ENCODE measurements at regions of chr6 and their contacts with region 1.

Region 1: DNA sequence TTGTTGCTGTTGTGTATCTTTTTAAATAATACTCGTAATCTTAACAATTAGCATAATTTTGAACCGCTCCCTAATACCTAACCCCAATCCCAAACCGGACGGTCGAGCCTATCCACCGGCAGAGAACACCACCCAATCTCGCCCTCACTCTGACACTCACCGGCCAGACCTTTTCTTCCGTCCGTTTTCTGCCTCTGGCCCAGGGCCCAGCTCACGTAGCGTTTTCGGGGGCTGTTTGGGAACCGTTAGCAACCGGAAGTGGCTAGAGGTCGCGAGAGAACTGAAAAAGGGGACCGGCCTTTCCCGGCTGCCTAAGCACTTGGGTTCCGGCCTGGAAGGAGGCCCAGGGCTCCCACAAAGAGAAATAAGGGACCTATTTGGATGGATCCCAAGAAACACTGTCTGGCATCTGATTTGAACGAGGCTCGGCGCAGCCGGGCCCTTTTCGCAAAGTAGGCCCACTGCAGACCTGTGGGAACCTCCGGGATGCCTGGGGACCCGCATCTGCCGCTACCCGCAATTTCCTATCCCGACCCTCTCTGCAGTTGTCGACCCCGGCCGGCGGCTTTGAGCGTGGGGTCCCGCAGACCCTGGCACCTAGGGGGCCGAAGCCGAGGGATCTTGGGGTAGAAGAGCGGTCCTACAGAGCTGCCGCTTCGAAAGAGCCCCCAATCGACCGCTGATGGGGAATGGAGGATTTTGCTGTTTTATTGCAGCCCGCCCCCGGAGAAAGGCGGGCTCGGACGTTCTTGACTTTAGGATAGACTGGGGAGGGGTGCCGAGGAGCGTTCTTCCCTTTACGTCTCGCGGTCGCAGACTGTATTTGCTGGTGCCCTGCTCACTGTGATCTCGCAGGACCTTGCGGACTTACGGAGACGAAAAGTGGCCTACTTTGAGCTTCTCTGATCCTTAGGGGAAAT is 4.8 kb upstream of the ZKSCAN8 start:
- H3K4me3 Mint-ChIP-seq: peak overlapping the region; percentile 91
- H3K27ac Mint-ChIP-seq: peak overlapping the region; percentile 92
- H3K4me1 Mint-ChIP-seq: peaks cover 53% of the 10 kb centered on the region
- H3K27me3 Mint-ChIP-seq: no peaks in the 10 kb centered on the region

Region 2: DNA sequence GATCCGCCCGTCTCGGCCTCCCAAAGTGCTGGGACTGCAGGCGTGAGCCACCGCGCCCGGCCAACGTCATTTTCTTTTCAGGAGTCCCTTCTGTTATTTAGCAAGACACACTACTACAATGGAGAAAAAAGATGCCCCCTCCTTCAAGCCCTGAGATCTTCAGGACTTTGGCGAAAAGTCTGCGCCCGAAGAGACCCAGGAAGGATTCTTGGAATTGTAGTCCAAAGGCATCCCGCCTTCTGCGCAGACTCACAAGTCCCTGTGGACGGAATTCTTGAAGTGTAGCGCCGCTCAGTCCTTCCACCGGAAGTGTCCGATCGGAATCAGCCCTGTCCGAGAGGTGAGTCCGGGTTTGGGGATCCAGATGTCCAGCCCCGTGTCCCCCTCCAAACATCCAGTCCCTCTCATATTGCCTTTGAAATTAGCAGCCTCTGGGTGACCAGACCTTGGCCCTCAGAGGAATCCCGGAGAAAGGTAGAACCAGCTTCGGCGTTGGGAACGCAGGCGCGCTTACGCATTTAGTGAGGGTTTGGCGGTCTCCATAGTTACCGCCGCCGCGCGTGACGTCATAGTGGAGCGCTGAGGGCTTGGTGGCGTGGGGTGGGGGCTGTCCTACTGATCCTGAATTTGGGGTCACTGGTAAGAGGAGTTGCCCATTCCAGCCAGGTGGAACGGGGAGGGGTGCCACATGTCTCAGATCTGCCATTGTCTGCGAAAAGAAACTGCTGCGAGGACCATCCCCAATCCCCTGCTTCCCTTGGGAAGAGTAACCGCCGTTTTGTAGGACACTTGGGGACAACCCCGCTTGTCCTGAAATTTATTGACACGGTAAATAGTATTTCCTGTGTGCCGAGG is 56.0 kb before region 1 on chr6:
- intact Hi-C with region 1: loop called (anchors 2 kb)
- H3K4me3 Mint-ChIP-seq: peak overlapping the region; percentile 97
- H3K27ac Mint-ChIP-seq: peak overlapping the region; percentile 97
- H3K4me1 Mint-ChIP-seq: peaks cover 18% of the 10 kb centered on the region
- H3K27me3 Mint-ChIP-seq: peaks cover 2% of the 10 kb centered on the region

Region 3: GRCh38 chr6:28252009-28252975 is 115.4 kb after region 1 on chr6 and contains the start of gene ZKSCAN4:
- intact Hi-C with region 1: loop called (anchors 2 kb)
- H3K4me3 Mint-ChIP-seq: peak within 1 kb of the TSS; percentile 97
- H3K27ac Mint-ChIP-seq: peak within 1 kb of the TSS; percentile 90
- H3K4me1 Mint-ChIP-seq: peaks cover 14% of the 10 kb centered on the region
- H3K27me3 Mint-ChIP-seq: no peaks in the 10 kb centered on the region

Region 4: DNA sequence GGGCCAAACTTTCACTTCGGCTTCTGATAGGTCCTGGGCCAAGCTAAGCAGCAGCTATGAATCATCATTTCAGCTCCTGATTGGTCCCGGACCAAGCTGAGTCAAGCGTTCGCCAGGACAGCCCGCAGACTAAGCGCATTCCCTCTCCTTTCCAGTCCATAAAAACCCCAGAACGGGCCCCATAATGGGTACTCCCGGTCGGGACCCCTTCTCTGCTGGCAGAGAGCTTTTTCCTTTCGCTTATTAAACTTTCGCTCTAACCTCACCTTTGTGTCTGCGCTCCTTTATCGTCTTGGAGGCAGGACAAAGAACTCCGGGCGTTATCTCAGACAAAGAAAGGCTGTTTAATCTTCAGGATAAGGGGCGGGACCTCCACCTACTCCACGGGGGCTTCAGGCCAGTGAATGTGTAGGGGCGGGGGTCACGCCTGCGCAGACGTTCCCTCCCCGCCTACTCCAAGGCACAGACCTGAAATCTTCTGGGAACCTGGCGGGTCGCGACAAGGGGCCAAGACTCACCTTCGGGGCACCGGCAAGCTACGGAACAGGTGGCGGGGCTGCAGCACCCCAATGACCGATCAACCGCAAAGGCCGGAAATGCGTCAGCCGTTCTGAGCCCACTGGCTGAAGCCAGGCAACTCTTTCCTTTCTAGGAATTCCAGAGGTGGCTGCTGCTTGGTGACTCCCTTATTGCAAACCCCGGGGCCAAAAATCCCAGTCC is 198.9 kb after region 1 on chr6 and contains the start of gene ZSCAN31:
- intact Hi-C with region 1: loop called (anchors 1 kb)
- H3K4me3 Mint-ChIP-seq: no peak within 1 kb of the TSS
- H3K27ac Mint-ChIP-seq: no peak within 1 kb of the TSS
- H3K4me1 Mint-ChIP-seq: peaks cover 25% of the 10 kb centered on the region
- H3K27me3 Mint-ChIP-seq: peaks cover 2% of the 10 kb centered on the region

Region 5: DNA sequence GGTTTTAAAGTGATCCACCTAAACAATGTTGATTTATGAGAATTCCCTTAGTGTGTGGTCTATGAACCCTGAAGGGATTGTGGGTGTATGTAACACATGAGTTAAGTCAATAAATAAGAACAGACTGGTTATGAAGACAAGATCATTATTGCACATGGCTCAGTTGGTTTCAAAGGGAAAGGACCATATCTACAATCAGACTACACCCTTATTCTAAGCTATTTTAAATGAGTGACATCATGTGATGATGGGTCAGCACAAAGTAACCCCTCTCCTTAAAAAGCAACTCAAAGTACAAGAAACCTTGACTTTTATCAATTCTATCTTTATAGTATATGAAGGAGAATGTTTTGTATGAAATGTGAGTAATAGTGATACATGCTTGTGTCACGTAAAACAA is 321.7 kb after region 1 on chr6:
- intact Hi-C with region 1: no loop called
- H3K4me3 Mint-ChIP-seq: no peak overlapping the region
- H3K27ac Mint-ChIP-seq: no peak overlapping the region
- H3K4me1 Mint-ChIP-seq: no peaks in the 10 kb centered on the region
- H3K27me3 Mint-ChIP-seq: peaks cover 24% of the 10 kb centered on the region

Measured in dendritic cell treated with granulocyte-macrophage colony-stimulating factor and Interleukin-4, amounts not matched to agents 40 ng/mL and 50 ng/mL, for 4 days (primary cell).